Colonic mucosa (tissue), 4 donors: ENCODE measurements at regions of chr6 and their contacts with region 1.

Region 1: GRCh38 chr6:16770701-16771569 is 9.7 kb upstream of the ATXN1 start:
- DNase-seq: peak; percentile 82
- H3K4me3 ChIP-seq: no peak overlapping the region
- H3K27ac ChIP-seq: no peak overlapping the region
- H3K4me1 ChIP-seq: peaks cover 14% of the 10 kb centered on the region
- H3K27me3 ChIP-seq: no peaks in the 10 kb centered on the region
- CTCF ChIP-seq: peak; percentile 90

Region 2: DNA sequence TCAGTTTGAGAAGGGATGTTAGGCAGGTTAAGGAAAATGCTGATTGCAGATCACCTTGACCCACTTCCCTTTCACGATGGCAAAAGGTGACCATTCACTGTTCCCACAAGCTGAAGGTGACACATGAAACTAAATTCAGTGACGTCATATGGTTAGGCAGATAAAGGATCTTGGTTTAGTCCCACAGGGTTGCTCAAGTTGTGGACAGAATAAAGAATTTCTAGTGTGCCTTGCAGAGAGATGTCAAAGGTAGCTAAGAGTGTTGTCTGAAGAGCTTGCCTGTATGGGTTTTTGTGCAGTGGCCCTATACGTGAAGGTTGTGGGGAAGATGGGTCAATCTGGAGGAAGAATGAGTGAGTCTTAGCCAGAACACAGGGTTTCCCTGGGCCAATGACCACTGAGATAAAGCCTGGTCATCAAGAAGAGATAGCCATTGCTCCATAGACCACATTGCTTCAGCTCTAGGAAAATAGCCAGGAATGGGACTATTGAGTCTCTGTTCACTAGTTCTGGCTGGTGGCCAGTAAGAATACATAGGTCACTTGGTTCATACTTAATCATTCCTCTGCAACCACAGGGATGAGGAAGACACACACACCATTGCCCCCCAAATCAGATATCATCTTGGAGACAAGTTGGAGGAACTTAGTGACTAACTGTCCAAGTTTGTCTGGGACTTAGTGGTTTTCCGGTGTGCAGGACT is 138.9 kb after region 1 on chr6:
- intact Hi-C with region 1: no loop called
- DNase-seq: no peak
- H3K4me3 ChIP-seq: no peak overlapping the region
- H3K27ac ChIP-seq: no peak overlapping the region
- H3K4me1 ChIP-seq: no peaks in the 10 kb centered on the region
- H3K27me3 ChIP-seq: no peaks in the 10 kb centered on the region
- CTCF ChIP-seq: no peak

Region 3: GRCh38 chr6:16964553-16965501 is 193.9 kb after region 1 on chr6:
- intact Hi-C with region 1: loop called (anchors 10 kb)
- DNase-seq: peak; percentile 65
- H3K4me3 ChIP-seq: no peak overlapping the region
- H3K27ac ChIP-seq: no peak overlapping the region
- H3K4me1 ChIP-seq: no peaks in the 10 kb centered on the region
- H3K27me3 ChIP-seq: no peaks in the 10 kb centered on the region
- CTCF ChIP-seq: peak; percentile 85

Region 4: DNA sequence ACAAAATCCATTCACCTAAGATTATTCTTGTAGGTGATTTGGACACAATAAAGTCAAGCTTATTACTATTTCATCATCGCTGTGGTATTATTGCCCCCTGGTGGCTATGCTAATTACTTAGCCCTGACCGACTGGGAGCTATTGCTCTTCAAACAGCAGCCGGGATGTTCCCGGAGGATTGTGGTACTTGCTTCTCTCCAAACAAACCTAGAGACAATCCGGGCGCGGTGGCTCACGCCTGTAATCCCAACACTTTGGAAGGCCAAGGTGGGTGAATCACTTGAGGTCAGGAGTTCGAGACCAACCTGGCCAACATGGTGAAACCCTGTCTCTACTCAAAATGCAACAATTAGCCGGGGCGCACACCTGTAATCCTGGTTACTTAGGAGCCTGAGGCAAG is 315.5 kb after region 1 on chr6:
- intact Hi-C with region 1: loop called (anchors 10 kb)
- DNase-seq: peak; percentile 65
- H3K4me3 ChIP-seq: no peak overlapping the region
- H3K27ac ChIP-seq: no peak overlapping the region
- H3K4me1 ChIP-seq: no peaks in the 10 kb centered on the region
- H3K27me3 ChIP-seq: no peaks in the 10 kb centered on the region
- CTCF ChIP-seq: peak; percentile 66